GM10248 (cell line): ENCODE measurements at regions of chr9 and their contacts with region 1.

Region 1: GRCh38 chr9:4923580-4924544 is 61.2 kb upstream of the JAK2 start:
- DNase-seq: peak; percentile 67
- CTCF ChIP-seq: peak; percentile 60

Region 2: DNA sequence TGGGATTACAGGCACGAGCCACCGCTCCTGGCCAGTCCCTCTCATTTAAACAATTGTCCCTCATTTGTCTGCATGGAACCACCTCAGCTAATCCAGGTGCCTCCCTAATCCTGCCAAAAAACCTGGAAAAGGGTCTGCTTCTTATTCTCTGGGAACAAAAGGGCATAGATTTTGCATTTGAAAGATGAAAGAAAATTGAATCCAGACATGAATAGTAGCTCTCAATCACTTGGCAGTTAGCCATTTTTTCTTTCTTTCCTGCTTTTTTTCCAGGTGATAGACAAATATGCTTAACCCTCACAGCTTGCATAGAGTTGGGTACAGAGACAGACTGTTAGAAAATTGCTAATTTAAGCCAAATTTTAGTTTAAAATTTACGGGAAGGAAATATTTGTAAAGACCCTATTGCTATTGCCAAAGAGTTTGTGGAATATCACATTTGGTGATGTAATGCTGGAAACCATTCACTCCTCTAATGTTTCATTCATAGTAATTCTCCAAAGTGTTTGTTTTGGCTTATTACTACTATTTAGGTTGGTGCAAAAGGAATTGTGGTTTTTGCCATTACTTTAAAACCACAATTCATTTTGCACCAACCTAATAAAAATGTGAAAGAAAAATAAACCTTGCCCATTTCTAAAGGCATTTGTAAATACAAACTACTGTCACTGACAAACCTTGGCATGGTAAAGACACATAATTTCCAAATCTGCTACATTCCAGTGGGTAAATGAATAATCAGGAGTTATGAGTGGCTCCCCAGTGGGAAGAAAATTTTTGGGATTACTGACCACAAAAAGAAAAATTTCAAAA is 19.3 kb before region 1 on chr9:
- CTCF ChIA-PET with region 1: interaction called, 18 read pairs
- POLR2A ChIA-PET with region 1: no interaction called
- DNase-seq: no peak
- CTCF ChIP-seq: no peak

Region 3: DNA sequence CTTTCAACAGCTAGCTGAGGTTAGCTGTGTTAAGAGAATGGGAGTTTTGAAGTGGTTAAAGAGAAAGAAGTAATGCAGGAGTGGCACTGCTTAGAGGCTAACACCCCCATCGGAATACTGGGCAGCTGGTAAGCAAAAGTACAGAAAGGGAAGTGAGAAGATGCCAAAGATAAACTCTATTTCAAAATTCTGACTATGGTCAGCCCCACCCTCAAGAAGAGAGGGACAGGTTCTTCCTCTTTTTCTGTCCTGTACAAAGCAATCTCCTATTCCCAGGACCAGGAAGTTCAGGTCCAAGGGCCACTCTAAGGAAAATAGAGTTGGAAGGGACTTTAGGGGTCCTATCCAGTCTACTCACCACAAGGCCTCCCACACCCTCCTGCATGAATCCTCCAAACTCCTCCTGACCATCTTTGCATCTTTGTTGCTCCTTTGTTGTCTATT is 15.3 kb after region 1 on chr9:
- CTCF ChIA-PET with region 1: interaction called, 23 read pairs
- POLR2A ChIA-PET with region 1: no interaction called
- DNase-seq: peak; percentile 27
- CTCF ChIP-seq: no peak